Activated CD4-positive, alpha-beta T cell treated with anti-CD3 and anti-CD28 coated beads, Interleukin-2, amount 10 ng/mL, durations not matched to agents 24 days and 14 days (primary cell): ENCODE measurements at regions of chr13 and their contacts with region 1.

Region 1: DNA sequence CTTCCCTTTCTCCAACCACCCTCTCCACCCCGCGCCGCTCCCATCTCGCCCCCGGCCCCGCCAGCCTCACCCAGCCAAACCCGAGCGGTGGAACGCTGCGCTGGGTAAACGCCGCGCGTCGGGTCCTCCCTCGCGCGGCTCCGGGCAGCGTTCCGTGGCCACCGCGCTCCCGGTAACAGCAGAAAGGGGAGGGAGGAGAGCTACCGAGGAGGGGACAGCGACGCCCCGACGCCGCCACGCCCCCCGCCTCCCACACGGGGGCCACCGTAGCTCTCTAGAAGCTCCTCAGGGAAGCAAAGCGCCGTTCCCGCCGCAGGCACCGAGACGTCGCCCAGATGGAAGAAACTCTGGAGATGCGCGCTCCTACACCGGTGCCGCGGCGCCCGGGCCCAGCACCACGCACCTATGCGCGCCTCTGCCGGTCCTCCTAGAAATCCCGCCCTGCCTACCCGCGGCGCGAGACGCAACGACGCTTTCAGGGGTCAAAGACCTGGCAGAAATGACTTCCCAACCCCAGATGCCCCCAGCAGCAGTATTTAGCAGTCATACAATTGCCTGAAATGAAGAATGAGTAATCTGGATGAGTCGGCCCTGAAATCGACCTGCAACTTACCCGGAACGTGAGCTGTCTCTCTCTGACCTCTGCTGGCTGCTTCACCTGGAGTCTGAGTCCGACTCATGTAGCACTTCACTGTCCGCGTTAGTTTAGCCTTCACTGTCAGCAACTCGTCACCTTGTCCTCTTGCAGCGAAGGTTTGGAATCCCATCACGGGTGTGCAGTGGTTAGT is at the start of gene RUBCNL:
- DNase-seq: peak; percentile 76
- H3K4me3 Mint-ChIP-seq: peak within 1 kb of the TSS; percentile 91
- H3K27ac Mint-ChIP-seq: no peak within 1 kb of the TSS
- H3K4me1 Mint-ChIP-seq: peaks cover 26% of the 10 kb centered on the region
- H3K27me3 Mint-ChIP-seq: peaks cover 33% of the 10 kb centered on the region
- total RNA-seq, gene RUBCNL: 1.5 TPM in 2 replicates

Region 2: GRCh38 chr13:46354156-46355091 is 32.8 kb before region 1 on chr13:
- intact Hi-C with region 1: loop called (anchors 2 kb)
- DNase-seq: peak; percentile 81
- H3K4me3 Mint-ChIP-seq: peak overlapping the region; percentile 21
- H3K27ac Mint-ChIP-seq: peak overlapping the region; percentile 95
- H3K4me1 Mint-ChIP-seq: peaks cover 14% of the 10 kb centered on the region
- H3K27me3 Mint-ChIP-seq: no peaks in the 10 kb centered on the region